CD4-positive, alpha-beta T cell (primary cell): ENCODE measurements at regions of chr13 and their contacts with region 1.

Region 1: DNA sequence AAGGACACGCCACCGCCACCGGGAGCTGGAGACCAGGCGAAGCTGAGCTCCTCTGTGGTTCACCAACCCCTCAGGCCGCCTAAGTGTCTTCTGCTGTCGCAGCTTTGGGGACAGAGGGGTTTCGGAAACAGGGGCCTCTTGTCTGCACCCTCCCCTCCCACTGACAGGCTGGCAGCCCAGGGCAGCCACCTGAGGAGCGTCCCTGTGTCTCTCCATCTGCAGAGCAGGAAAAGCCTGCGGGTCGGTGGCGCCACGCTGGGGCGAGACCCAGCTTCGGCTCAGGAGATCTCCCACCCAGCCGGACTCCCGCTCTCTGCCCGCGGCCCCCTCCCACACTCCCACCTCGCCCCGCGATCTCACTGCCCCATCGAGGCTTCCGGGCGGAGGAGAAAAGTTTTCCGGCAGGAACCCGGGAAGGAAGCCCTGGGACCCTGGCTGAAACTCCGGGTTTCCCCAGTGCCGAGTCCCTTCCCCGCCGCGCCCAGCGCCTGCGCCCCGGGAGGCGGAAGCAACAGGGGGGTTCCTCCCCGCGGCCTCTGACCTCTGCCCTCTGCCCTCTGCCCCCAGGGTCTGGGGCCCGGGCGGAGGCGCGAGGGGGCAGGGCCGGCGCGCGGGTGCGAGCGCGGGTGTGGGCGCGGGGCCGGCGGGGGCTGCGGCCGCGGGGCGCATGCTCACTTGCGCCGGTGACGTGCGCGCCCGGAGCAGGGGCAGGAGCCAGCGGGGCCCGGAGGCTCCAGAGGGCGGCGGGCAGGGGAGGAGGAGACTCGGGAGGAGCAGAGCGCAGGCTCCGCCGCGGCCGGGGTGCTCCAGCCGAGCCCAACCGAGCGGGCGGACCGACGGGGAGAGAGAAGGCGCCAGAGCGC is at the start of gene ATP11A:
- DNase-seq: peak; percentile 57 to 93 (median 76)
- ATAC-seq: peak; percentile 80
- H3K4me3 ChIP-seq: peak within 1 kb of the TSS; percentile 88
- H3K4me3 Mint-ChIP-seq: peak within 1 kb of the TSS; percentile 92
- H3K27ac ChIP-seq: peak within 1 kb of the TSS; percentile 79 to 88
- H3K27ac Mint-ChIP-seq: peak within 1 kb of the TSS; percentile 75
- H3K4me1 ChIP-seq: peaks cover 53% of the 10 kb centered on the region
- H3K4me1 Mint-ChIP-seq: peaks cover 53% of the 10 kb centered on the region
- H3K27me3 ChIP-seq: no peaks in the 10 kb centered on the region
- H3K27me3 Mint-ChIP-seq: no peaks in the 10 kb centered on the region
- CTCF ChIP-seq: no peak
- total RNA-seq, gene ATP11A: 56.7 to 66.8 TPM

Region 2: GRCh38 chr13:112587212-112587763 is 102.2 kb before region 1 on chr13:
- CTCF ChIA-PET with region 1: no interaction called
- POLR2A ChIA-PET with region 1: interaction called, 3 read pairs
- intact Hi-C with region 1: loop called in 1 of 2 experiments (anchors 1 kb)
- DNase-seq: peak; percentile 13 to 84 (median 54)
- ATAC-seq: peak; percentile 64
- H3K4me3 ChIP-seq: peak overlapping the region; percentile 85
- H3K4me3 Mint-ChIP-seq: peak overlapping the region; percentile 96
- H3K27ac ChIP-seq: peak overlapping the region; percentile 46 to 75
- H3K27ac Mint-ChIP-seq: peak overlapping the region; percentile 73
- H3K4me1 ChIP-seq: peaks cover 31% of the 10 kb centered on the region
- H3K4me1 Mint-ChIP-seq: peaks cover 46% of the 10 kb centered on the region
- H3K27me3 ChIP-seq: no peaks in the 10 kb centered on the region
- H3K27me3 Mint-ChIP-seq: no peaks in the 10 kb centered on the region
- CTCF ChIP-seq: no peak

Region 3: GRCh38 chr13:112643759-112644459 is 45.6 kb before region 1 on chr13:
- CTCF ChIA-PET with region 1: no interaction called
- POLR2A ChIA-PET with region 1: interaction called, 3 read pairs
- intact Hi-C with region 1: loop called (anchors 2 to 5 kb)
- DNase-seq: no peak
- ATAC-seq: no peak
- H3K4me3 ChIP-seq: no peak overlapping the region
- H3K4me3 Mint-ChIP-seq: no peak overlapping the region
- H3K27ac ChIP-seq: no peak overlapping the region
- H3K27ac Mint-ChIP-seq: no peak overlapping the region
- H3K4me1 ChIP-seq: peaks cover 15% of the 10 kb centered on the region
- H3K4me1 Mint-ChIP-seq: no peaks in the 10 kb centered on the region
- H3K27me3 ChIP-seq: peaks cover 0 to 3% of the 10 kb centered on the region in 2 experiments
- H3K27me3 Mint-ChIP-seq: peaks cover 3% of the 10 kb centered on the region
- CTCF ChIP-seq: no peak

Region 4: DNA sequence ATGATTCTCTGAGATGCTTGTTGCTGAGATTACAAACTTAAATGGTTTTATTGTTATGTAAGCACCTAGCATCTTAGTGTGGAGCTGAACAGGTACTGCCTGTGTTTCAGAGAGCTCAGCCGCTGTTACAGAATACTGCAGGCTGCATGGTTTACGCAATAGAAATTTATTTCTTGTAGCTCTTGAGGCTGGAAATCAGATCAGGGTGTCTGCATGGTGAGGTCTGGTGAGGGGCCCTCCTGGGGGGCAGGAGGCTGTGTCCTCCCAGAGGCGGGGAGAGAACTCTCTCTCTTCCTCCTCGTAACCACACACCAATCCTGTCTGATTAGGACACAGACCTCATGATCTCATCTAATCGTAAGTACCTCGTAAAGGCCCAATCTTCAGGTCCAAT is 13.4 kb after region 1 on chr13:
- CTCF ChIA-PET with region 1: no interaction called
- POLR2A ChIA-PET with region 1: no interaction called
- intact Hi-C with region 1: no loop called
- DNase-seq: peak in 1 of 14 experiments; percentile 21
- ATAC-seq: no peak
- H3K4me3 ChIP-seq: no peak overlapping the region
- H3K4me3 Mint-ChIP-seq: no peak overlapping the region
- H3K27ac ChIP-seq: no peak overlapping the region
- H3K27ac Mint-ChIP-seq: no peak overlapping the region
- H3K4me1 ChIP-seq: peaks cover 19% of the 10 kb centered on the region
- H3K4me1 Mint-ChIP-seq: peaks cover 42% of the 10 kb centered on the region
- H3K27me3 ChIP-seq: no peaks in the 10 kb centered on the region
- H3K27me3 Mint-ChIP-seq: no peaks in the 10 kb centered on the region
- CTCF ChIP-seq: no peak

Region 5: GRCh38 chr13:112869202-112870050 is 179.9 kb after region 1 on chr13:
- CTCF ChIA-PET with region 1: no interaction called
- POLR2A ChIA-PET with region 1: no interaction called
- intact Hi-C with region 1: no loop called
- DNase-seq: no peak
- ATAC-seq: no peak
- H3K4me3 ChIP-seq: no peak overlapping the region
- H3K4me3 Mint-ChIP-seq: no peak overlapping the region
- H3K27ac ChIP-seq: no peak overlapping the region
- H3K27ac Mint-ChIP-seq: no peak overlapping the region
- H3K4me1 ChIP-seq: peaks cover 35% of the 10 kb centered on the region
- H3K4me1 Mint-ChIP-seq: peaks cover 16% of the 10 kb centered on the region
- H3K27me3 ChIP-seq: no peaks in the 10 kb centered on the region
- H3K27me3 Mint-ChIP-seq: no peaks in the 10 kb centered on the region
- CTCF ChIP-seq: no peak

Region 6: GRCh38 chr13:113044391-113045114 is 355.0 kb after region 1 on chr13:
- CTCF ChIA-PET with region 1: no interaction called
- POLR2A ChIA-PET with region 1: no interaction called
- intact Hi-C with region 1: no loop called
- DNase-seq: no peak
- ATAC-seq: no peak
- H3K4me3 ChIP-seq: no peak overlapping the region
- H3K4me3 Mint-ChIP-seq: no peak overlapping the region
- H3K27ac ChIP-seq: no peak overlapping the region
- H3K27ac Mint-ChIP-seq: no peak overlapping the region
- H3K4me1 ChIP-seq: no peaks in the 10 kb centered on the region
- H3K4me1 Mint-ChIP-seq: no peaks in the 10 kb centered on the region
- H3K27me3 ChIP-seq: no peaks in the 10 kb centered on the region
- H3K27me3 Mint-ChIP-seq: no peaks in the 10 kb centered on the region
- CTCF ChIP-seq: no peak